ENCODE measurements at regions of chr15 and their contacts with region 1.

Region 1: DNA sequence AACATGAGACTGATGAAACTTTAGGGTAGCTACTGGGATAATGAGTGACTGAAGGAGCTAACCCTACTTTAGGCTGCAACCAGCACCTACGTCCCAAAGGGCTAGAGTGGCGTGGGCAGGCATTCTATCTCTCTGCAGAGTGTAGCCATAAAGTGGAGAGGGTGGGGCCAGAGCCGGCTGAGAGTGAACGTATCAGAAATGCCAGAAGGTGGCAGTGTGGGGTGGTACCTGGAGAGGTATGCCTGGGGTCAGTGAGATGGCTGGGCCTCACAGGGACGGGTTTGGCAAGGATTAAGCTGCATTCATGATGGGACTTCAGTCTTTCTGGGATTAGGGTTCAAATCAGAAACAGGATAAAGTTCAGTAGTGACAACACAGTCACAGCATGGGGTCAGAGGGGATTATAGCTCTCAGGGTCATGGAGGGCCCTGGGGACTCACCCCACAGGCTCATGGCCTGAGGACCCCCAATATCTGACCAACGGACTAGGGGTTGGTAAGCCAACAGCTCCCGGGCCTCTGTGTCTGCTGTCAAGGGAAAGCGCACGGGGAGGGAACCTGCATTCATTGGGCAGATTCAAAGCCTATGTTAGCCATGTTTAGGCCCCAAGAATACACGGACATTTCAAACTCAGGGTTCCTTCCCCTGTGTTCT is 86.5 kb upstream of the FOXB1 start:
- DNase-seq: peak; percentile 28 to 81
- ATAC-seq: peak; percentile 74 to 99 (median 81)
- H3K4me3 ChIP-seq: no peak overlapping the region
- H3K4me3 Mint-ChIP-seq: no peak overlapping the region
- H3K27ac ChIP-seq: no peak overlapping the region
- H3K27ac Mint-ChIP-seq: no peak overlapping the region
- H3K4me1 ChIP-seq: no peaks in the 10 kb centered on the region
- H3K4me1 Mint-ChIP-seq: no peaks in the 10 kb centered on the region
- H3K27me3 ChIP-seq: no peaks in the 10 kb centered on the region
- H3K27me3 Mint-ChIP-seq: peaks cover 10 to 28% of the 10 kb centered on the region in 2 donors
- CTCF ChIP-seq: peak; percentile 53

Region 2: GRCh38 chr15:60128000-60128376 is 210.4 kb after region 1 on chr15:
- intact Hi-C with region 1: loop called (anchors 1 kb)
- DNase-seq: no peak
- ATAC-seq: no peak
- H3K4me3 ChIP-seq: peak overlapping the region; percentile 68
- H3K4me3 Mint-ChIP-seq: peak overlapping the region; percentile 83
- H3K27ac ChIP-seq: peak overlapping the region; percentile 84
- H3K27ac Mint-ChIP-seq: peak overlapping the region; percentile 87
- H3K4me1 ChIP-seq: peaks cover 8% of the 10 kb centered on the region
- H3K4me1 Mint-ChIP-seq: peaks cover 17 to 23% of the 10 kb centered on the region in 2 donors
- H3K27me3 ChIP-seq: no peaks in the 10 kb centered on the region
- H3K27me3 Mint-ChIP-seq: peaks cover 0 to 8% of the 10 kb centered on the region in 2 donors
- CTCF ChIP-seq: no peak

Measured in natural killer cell (primary cell).